ENCODE measurements at regions of chr1 and their contacts with region 1.

Region 1: GRCh38 chr1:92461364-92462097 is 25.2 kb downstream of the GFI1 start:
- DNase-seq: no peak
- ATAC-seq: peak; percentile 87
- H3K4me3 ChIP-seq: no peak overlapping the region
- H3K27ac ChIP-seq: no peak overlapping the region
- H3K4me1 ChIP-seq: peaks cover 17% of the 10 kb centered on the region
- H3K27me3 ChIP-seq: no peaks in the 10 kb centered on the region
- CTCF ChIP-seq: peak in 2 of 3 experiments; percentile 23 to 41; a peak in 3 of 6 replicates
- EP300 ChIP-seq: 0 out of 4 replicates have a peak, but pooled peaks of 1 of the 2 experiments have one; percentile 42
- POLR2A ChIP-seq: no peak
- RAD21 ChIP-seq: peak; percentile 67

Region 2: GRCh38 chr1:91655912-91656449 is 805.5 kb before region 1 on chr1:
- CTCF ChIA-PET with region 1: no interaction called
- POLR2A ChIA-PET with region 1: no interaction called
- RAD21 ChIA-PET with region 1: no interaction called
- SMC1A ChIA-PET with region 1: no interaction called
- in situ Hi-C with region 1: no loop called
- intact Hi-C with region 1: no loop called
- DNase-seq: no peak
- ATAC-seq: no peak
- H3K4me3 ChIP-seq: no peak overlapping the region
- H3K27ac ChIP-seq: no peak overlapping the region
- H3K4me1 ChIP-seq: peaks cover 5% of the 10 kb centered on the region; the same call in 1 of the 2 replicates
- H3K27me3 ChIP-seq: no peaks in the 10 kb centered on the region; a peak in 1 of 4 replicates
- CTCF ChIP-seq: no peak
- EP300 ChIP-seq: no peak
- POLR2A ChIP-seq: no peak
- RAD21 ChIP-seq: no peak

Region 3: DNA sequence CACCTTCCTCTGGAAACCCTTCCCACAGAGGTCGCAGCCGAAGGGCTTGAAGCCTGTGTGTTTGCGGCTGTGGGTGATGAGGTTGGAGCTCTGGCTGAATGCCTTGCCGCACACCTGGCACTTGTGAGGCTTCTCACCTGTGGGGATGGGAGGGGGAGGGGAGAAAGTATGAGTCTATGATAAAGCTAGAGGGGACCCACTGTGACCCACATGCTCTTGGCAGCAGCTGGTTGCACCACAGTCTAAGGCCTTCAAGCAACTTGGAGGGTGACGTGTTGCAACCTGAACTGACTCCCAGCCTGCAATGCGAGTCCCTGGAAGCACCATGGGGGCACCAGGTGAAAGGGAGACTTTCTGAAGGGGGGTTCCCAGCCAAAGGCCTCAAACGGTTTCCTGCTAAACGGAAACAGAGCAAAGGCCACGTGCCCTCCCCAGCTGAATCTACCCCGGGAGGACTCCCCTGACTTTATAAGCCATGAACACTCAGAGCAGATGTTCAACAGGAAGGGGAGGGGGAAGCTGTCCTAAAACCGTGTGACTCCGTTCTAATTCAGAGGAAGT is 14.6 kb after region 1 on chr1:
- CTCF ChIA-PET with region 1: interaction called, 5 read pairs
- POLR2A ChIA-PET with region 1: interaction called, 9 read pairs
- RAD21 ChIA-PET with region 1: interaction called, 5 read pairs
- SMC1A ChIA-PET with region 1: interaction called, 36 read pairs
- in situ Hi-C with region 1: no loop called
- intact Hi-C with region 1: no loop called
- DNase-seq: no peak
- ATAC-seq: peak; percentile 56
- H3K4me3 ChIP-seq: no peak overlapping the region
- H3K27ac ChIP-seq: no peak overlapping the region
- H3K4me1 ChIP-seq: peaks cover 34% of the 10 kb centered on the region
- H3K27me3 ChIP-seq: no peaks in the 10 kb centered on the region
- CTCF ChIP-seq: no peak
- EP300 ChIP-seq: no peak
- POLR2A ChIP-seq: 0 out of 2 replicates have a peak, but pooled peaks have one; percentile 44
- RAD21 ChIP-seq: no peak

Region 4: GRCh38 chr1:92599184-92599583 is 137.7 kb after region 1 on chr1:
- CTCF ChIA-PET with region 1: interaction called, 7 read pairs
- POLR2A ChIA-PET with region 1: no interaction called
- RAD21 ChIA-PET with region 1: interaction called, 8 read pairs
- SMC1A ChIA-PET with region 1: interaction called, 8 read pairs
- in situ Hi-C with region 1: loop called (anchors 5 kb)
- intact Hi-C with region 1: loop called (anchors 2 kb)
- DNase-seq: no peak
- ATAC-seq: peak; percentile 76
- H3K4me3 ChIP-seq: no peak overlapping the region
- H3K27ac ChIP-seq: no peak overlapping the region
- H3K4me1 ChIP-seq: no peaks in the 10 kb centered on the region
- H3K27me3 ChIP-seq: no peaks in the 10 kb centered on the region
- CTCF ChIP-seq: peak; percentile 21 to 55 (median 25); a peak in 3 of 6 replicates
- EP300 ChIP-seq: no peak
- POLR2A ChIP-seq: no peak
- RAD21 ChIP-seq: peak; percentile 82

Measured in GM12878 (cell line).